Naive thymus-derived CD4-positive, alpha-beta T cell (primary cell): ENCODE measurements at regions of chr12 and their contacts with region 1.

Region 1: GRCh38 chr12:92145731-92146496 is at the start of gene BTG1:
- DNase-seq: peak; percentile 90 to 100 (median 100)
- ATAC-seq: peak; percentile 84
- H3K4me3 ChIP-seq: peak within 1 kb of the TSS; percentile 98
- H3K4me3 Mint-ChIP-seq: peak within 1 kb of the TSS; percentile 94 to 100 (median 98)
- H3K27ac ChIP-seq: peak within 1 kb of the TSS; percentile 91
- H3K27ac Mint-ChIP-seq: peak within 1 kb of the TSS; percentile 98 to 100 (median 99)
- H3K4me1 ChIP-seq: peaks cover 7 to 14% of the 10 kb centered on the region in 2 donors
- H3K4me1 Mint-ChIP-seq: peaks cover 18 to 34% (median 27%) of the 10 kb centered on the region in 7 donors
- H3K27me3 ChIP-seq: no peaks in the 10 kb centered on the region
- H3K27me3 Mint-ChIP-seq: peaks cover 0 to 4% (median 0%) of the 10 kb centered on the region in 5 donors
- total RNA-seq, gene BTG1: 188 to 1,246 (median 571) TPM

Region 2: GRCh38 chr12:91230846-91231245 is 915.1 kb before region 1 on chr12:
- CTCF ChIA-PET with region 1: no interaction called
- POLR2A ChIA-PET with region 1: no interaction called
- intact Hi-C with region 1: no loop called
- DNase-seq: no peak
- ATAC-seq: no peak
- H3K4me3 ChIP-seq: no peak overlapping the region
- H3K4me3 Mint-ChIP-seq: no peak overlapping the region
- H3K27ac ChIP-seq: no peak overlapping the region
- H3K27ac Mint-ChIP-seq: no peak overlapping the region
- H3K4me1 ChIP-seq: no peaks in the 10 kb centered on the region
- H3K4me1 Mint-ChIP-seq: no peaks in the 10 kb centered on the region
- H3K27me3 ChIP-seq: no peaks in the 10 kb centered on the region
- H3K27me3 Mint-ChIP-seq: peaks cover 0 to 19% (median 7%) of the 10 kb centered on the region in 5 donors

Region 3: GRCh38 chr12:91637789-91638624 is 507.9 kb before region 1 on chr12:
- CTCF ChIA-PET with region 1: no interaction called
- POLR2A ChIA-PET with region 1: no interaction called
- intact Hi-C with region 1: no loop called
- DNase-seq: no peak
- ATAC-seq: no peak
- H3K4me3 ChIP-seq: no peak overlapping the region
- H3K4me3 Mint-ChIP-seq: no peak overlapping the region
- H3K27ac ChIP-seq: no peak overlapping the region
- H3K27ac Mint-ChIP-seq: no peak overlapping the region
- H3K4me1 ChIP-seq: no peaks in the 10 kb centered on the region
- H3K4me1 Mint-ChIP-seq: peaks cover 0 to 5% (median 0%) of the 10 kb centered on the region in 7 donors
- H3K27me3 ChIP-seq: no peaks in the 10 kb centered on the region
- H3K27me3 Mint-ChIP-seq: peaks cover 0 to 4% (median 0%) of the 10 kb centered on the region in 5 donors

Region 4: DNA sequence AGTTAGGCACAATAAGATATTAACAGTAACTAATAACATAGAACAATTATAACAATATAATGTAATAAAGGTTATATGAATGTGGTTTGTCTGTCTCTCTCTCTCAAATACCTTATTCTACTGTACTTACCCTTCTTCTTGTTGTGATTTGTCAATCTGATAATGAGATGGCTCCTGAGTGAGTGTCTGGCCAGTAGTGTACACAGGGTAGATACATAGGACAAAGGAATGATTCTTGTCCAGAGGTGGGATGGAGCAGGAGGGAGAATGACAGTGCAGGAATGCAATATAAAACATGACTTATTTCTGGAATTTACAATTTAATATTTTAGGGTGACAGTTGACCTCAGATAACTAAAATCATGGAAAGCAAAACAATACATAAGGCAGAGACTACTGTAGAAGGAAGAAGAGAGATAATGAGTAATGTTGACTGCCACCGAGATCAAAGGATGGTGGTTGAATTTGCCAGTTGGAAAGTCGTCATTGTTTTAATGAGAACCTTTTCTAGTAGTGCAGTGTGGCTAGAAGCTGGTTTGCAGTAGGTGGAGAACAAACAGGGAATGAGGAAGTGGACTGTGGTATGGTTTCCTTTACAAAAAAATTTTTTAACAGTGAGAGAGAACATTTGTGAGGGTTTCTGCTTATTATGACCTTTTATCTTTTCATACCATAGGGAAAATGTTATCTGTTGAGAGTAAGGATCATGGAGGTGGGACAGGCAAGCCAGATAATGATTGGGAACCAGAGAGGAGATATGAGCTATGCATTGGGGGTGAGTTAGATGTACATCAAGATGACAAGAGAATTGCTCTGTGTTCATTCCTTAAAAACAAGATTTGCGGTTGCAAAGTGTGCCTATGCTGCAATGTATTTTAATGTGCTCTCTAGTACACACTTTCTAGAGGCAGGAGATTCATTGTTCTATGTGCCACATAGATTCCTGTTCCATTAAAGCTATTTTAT is 458.6 kb before region 1 on chr12:
- CTCF ChIA-PET with region 1: no interaction called
- POLR2A ChIA-PET with region 1: interaction called, 7 read pairs
- intact Hi-C with region 1: loop called in 1 of 2 experiments (anchors 5 kb)
- DNase-seq: peak in 8 of 9 donors; percentile 25 to 83 (median 76)
- ATAC-seq: peak; percentile 92
- H3K4me3 ChIP-seq: no peak overlapping the region
- H3K4me3 Mint-ChIP-seq: peak overlapping the region in 9 of 10 donors; percentile 4 to 52 (median 38)
- H3K27ac ChIP-seq: no peak overlapping the region
- H3K27ac Mint-ChIP-seq: peak overlapping the region; percentile 6 to 84 (median 53)
- H3K4me1 ChIP-seq: peaks cover 0 to 17% of the 10 kb centered on the region in 2 donors
- H3K4me1 Mint-ChIP-seq: peaks cover 10 to 32% (median 25%) of the 10 kb centered on the region in 7 donors
- H3K27me3 ChIP-seq: no peaks in the 10 kb centered on the region
- H3K27me3 Mint-ChIP-seq: no peaks in the 10 kb centered on the region

Region 5: DNA sequence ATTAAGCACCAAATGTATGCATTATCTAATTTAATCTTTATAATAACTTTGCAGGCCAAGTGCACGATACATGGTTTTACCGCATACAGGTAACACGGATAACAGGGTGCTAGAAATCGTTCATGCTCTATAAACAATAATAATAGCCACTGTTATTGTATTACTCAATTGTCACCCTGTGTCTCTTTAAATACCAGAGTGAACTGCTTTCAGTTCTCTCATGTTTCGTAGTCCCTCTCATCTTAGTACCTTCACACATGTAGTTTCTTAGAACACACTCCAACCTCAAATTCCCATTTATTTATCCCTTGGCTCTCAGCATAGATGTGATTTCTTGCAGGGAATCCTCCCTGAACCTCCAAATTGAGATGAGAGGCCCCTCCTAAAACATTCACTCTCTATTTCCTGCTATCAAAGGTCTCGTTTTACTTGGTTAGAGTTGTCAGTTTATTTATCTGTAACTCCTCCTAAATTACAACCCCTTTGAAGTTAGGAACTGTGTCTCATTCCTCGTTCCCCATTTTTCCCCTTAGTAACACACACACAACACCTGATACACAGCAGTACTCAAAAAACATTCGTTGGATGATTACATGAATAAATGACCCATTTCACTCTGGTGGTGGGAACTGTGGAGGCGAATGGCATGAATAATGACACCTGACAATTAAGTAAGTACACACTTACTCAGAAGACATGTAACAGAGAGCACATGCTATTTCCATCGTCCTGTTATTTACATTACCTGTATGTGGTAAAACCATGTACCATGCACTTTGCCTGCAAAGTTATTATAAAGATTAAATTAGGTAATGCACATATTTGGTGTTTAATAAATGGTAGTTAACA is 134.8 kb before region 1 on chr12:
- CTCF ChIA-PET with region 1: interaction called, 5 read pairs
- POLR2A ChIA-PET with region 1: interaction called, 62 read pairs
- intact Hi-C with region 1: loop called in 1 of 2 experiments (anchors 5 kb)
- DNase-seq: peak in 4 of 9 donors; percentile 21 to 37 (median 32)
- ATAC-seq: peak; percentile 37
- H3K4me3 ChIP-seq: peak overlapping the region; percentile 22
- H3K4me3 Mint-ChIP-seq: peak overlapping the region; percentile 32 to 90 (median 84)
- H3K27ac ChIP-seq: peak overlapping the region; percentile 69
- H3K27ac Mint-ChIP-seq: peak overlapping the region; percentile 63 to 98 (median 95)
- H3K4me1 ChIP-seq: peaks cover 11 to 36% of the 10 kb centered on the region in 2 donors
- H3K4me1 Mint-ChIP-seq: peaks cover 19 to 79% (median 69%) of the 10 kb centered on the region in 7 donors
- H3K27me3 ChIP-seq: no peaks in the 10 kb centered on the region
- H3K27me3 Mint-ChIP-seq: no peaks in the 10 kb centered on the region

Region 6: GRCh38 chr12:92158796-92159439 is 13.0 kb after region 1 on chr12:
- CTCF ChIA-PET with region 1: interaction called, 3 read pairs
- POLR2A ChIA-PET with region 1: interaction called, 232 read pairs
- intact Hi-C with region 1: loop called in 1 of 2 experiments (anchors 1 kb)
- DNase-seq: peak in 4 of 9 donors; percentile 32 to 58 (median 48)
- ATAC-seq: peak; percentile 84
- H3K4me3 ChIP-seq: peak overlapping the region; percentile 15
- H3K4me3 Mint-ChIP-seq: peak overlapping the region; percentile 49 to 87 (median 76)
- H3K27ac ChIP-seq: peak overlapping the region; percentile 70
- H3K27ac Mint-ChIP-seq: peak overlapping the region; percentile 65 to 99 (median 95)
- H3K4me1 ChIP-seq: peaks cover 0 to 46% of the 10 kb centered on the region in 2 donors
- H3K4me1 Mint-ChIP-seq: peaks cover 28 to 92% (median 78%) of the 10 kb centered on the region in 7 donors
- H3K27me3 ChIP-seq: no peaks in the 10 kb centered on the region
- H3K27me3 Mint-ChIP-seq: no peaks in the 10 kb centered on the region

Region 7: GRCh38 chr12:92297932-92298696 is 152.2 kb after region 1 on chr12:
- CTCF ChIA-PET with region 1: interaction called, 3 read pairs
- POLR2A ChIA-PET with region 1: interaction called, 41 read pairs
- intact Hi-C with region 1: loop called (anchors 1 to 5 kb)
- DNase-seq: peak in 7 of 9 donors; percentile 29 to 75 (median 58)
- ATAC-seq: peak; percentile 83
- H3K4me3 ChIP-seq: no peak overlapping the region
- H3K4me3 Mint-ChIP-seq: peak overlapping the region in 9 of 10 donors; percentile 9 to 80 (median 63)
- H3K27ac ChIP-seq: peak overlapping the region; percentile 57
- H3K27ac Mint-ChIP-seq: peak overlapping the region in 2 of 9 donors; percentile 85 to 96
- H3K4me1 ChIP-seq: peaks cover 17 to 42% of the 10 kb centered on the region in 2 donors
- H3K4me1 Mint-ChIP-seq: peaks cover 8 to 33% (median 27%) of the 10 kb centered on the region in 7 donors
- H3K27me3 ChIP-seq: no peaks in the 10 kb centered on the region
- H3K27me3 Mint-ChIP-seq: no peaks in the 10 kb centered on the region

Region 8: GRCh38 chr12:92408072-92408900 is 262.4 kb after region 1 on chr12:
- CTCF ChIA-PET with region 1: interaction called, 7 read pairs
- POLR2A ChIA-PET with region 1: interaction called, 211 read pairs
- intact Hi-C with region 1: loop called (anchors 1 kb)
- DNase-seq: peak in 3 of 9 donors; percentile 29 to 40 (median 30)
- ATAC-seq: peak; percentile 34
- H3K4me3 ChIP-seq: no peak overlapping the region
- H3K4me3 Mint-ChIP-seq: peak overlapping the region in 4 of 10 donors; percentile 18 to 58 (median 28)
- H3K27ac ChIP-seq: no peak overlapping the region
- H3K27ac Mint-ChIP-seq: peak overlapping the region in 8 of 9 donors; percentile 30 to 89 (median 72)
- H3K4me1 ChIP-seq: peaks cover 30 to 33% of the 10 kb centered on the region in 2 donors
- H3K4me1 Mint-ChIP-seq: peaks cover 21 to 80% (median 67%) of the 10 kb centered on the region in 7 donors
- H3K27me3 ChIP-seq: no peaks in the 10 kb centered on the region
- H3K27me3 Mint-ChIP-seq: no peaks in the 10 kb centered on the region

Region 9: DNA sequence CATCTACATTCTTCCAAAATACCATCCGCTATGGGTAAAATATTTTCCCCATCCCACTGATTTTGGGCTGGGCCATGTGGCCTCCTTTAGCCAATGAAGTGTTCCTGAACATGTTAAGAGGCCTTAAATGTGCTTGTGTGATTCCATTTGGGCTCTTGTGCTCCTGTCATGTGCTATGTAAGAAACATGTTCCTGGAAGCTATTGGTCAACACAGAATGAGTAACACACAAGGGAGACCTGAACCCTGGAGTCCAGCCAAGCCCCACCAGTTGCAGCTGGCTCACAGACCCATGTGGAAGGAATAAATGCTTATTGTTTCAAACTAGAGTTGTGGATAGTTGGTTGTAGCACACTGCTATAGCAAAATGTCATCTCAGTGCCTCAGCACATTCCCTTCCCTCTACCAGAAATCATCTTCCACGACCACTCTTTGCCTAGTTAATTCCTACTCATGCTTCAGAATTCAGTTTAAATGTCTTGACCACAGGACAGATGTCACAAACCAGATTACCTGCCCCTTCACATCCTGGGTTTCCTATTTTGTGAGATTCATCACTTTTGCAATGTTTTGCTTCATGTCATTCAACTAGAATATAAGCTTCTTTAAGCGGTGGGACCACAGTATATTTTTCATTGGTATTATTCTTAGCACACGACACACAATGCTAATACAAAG is 1000.5 kb after region 1 on chr12:
- CTCF ChIA-PET with region 1: no interaction called
- POLR2A ChIA-PET with region 1: no interaction called
- intact Hi-C with region 1: no loop called
- DNase-seq: no peak
- ATAC-seq: no peak
- H3K4me3 ChIP-seq: no peak overlapping the region
- H3K4me3 Mint-ChIP-seq: no peak overlapping the region
- H3K27ac ChIP-seq: no peak overlapping the region
- H3K27ac Mint-ChIP-seq: no peak overlapping the region
- H3K4me1 ChIP-seq: no peaks in the 10 kb centered on the region
- H3K4me1 Mint-ChIP-seq: no peaks in the 10 kb centered on the region
- H3K27me3 ChIP-seq: no peaks in the 10 kb centered on the region
- H3K27me3 Mint-ChIP-seq: peaks cover 0 to 15% (median 0%) of the 10 kb centered on the region in 5 donors